Common myeloid progenitor, CD34-positive (primary cell): ENCODE measurements at regions of chr4 and their contacts with region 1.

Region 1: DNA sequence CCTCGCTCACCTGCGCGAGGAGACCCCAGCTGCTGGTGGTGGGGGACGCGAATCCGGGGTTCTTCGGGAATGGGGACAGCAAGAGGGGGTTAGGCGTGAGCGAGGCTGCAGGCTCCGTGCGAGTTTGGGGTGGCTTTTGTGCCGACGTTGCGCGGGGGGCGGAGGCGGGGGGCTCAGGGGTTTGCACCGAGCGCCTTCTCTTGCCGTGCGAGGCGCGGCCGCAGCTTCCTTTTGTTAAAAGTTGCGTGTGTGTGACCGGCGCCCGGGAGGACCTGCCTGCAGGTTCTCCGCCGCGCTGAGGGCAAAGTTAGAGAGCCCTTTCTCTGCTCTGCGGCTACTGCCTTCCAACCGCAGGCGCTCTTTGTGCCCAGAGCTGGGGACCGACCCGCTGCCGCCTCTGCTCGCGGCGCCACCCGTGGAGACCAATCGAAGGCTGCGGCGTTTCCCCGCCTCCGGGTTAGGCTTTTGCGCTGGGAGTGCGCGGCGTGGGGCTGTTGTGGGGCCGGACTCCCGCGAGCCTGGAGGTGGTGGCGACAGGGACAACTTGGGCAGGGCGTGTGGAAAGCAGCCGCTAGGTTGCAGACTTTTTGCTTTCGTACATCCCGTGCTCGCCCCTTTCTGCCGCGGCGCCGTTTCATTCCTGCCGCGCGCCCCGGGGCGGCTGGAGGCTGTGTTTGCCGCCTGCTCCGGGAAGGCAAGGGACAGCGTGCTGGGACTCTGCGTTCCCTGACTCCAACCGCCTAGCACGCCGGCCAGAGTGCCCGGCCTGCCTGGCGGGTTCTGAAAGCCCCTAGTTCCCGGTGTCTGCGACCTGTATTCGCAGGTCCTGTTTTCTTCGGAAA is 716 bp downstream of the KIT start:
- DNase-seq: peak; percentile 79 to 93 (median 91)
- H3K4me3 ChIP-seq: peak overlapping the region; percentile 77 to 99 (median 90)
- H3K27ac ChIP-seq: peak overlapping the region; percentile 78 to 87
- H3K4me1 ChIP-seq: peaks cover 9 to 57% (median 46%) of the 10 kb centered on the region in 4 experiments
- H3K27me3 ChIP-seq: peaks cover 0 to 4% (median 0%) of the 10 kb centered on the region in 5 experiments

Region 2: GRCh38 chr4:54669831-54670230 is 11.4 kb after region 1 on chr4:
- CTCF ChIA-PET with region 1: interaction called, 71 read pairs
- POLR2A ChIA-PET with region 1: interaction called, 6 read pairs
- DNase-seq: no peak
- H3K4me3 ChIP-seq: no peak overlapping the region
- H3K27ac ChIP-seq: no peak overlapping the region
- H3K4me1 ChIP-seq: peaks cover 9 to 44% (median 21%) of the 10 kb centered on the region in 4 experiments
- H3K27me3 ChIP-seq: no peaks in the 10 kb centered on the region

Region 3: GRCh38 chr4:54675721-54676461 is 17.4 kb after region 1 on chr4:
- CTCF ChIA-PET with region 1: interaction called, 71 read pairs
- POLR2A ChIA-PET with region 1: interaction called, 6 read pairs
- DNase-seq: no peak
- H3K4me3 ChIP-seq: no peak overlapping the region
- H3K27ac ChIP-seq: no peak overlapping the region
- H3K4me1 ChIP-seq: peaks cover 9 to 63% (median 36%) of the 10 kb centered on the region in 4 experiments
- H3K27me3 ChIP-seq: no peaks in the 10 kb centered on the region